ENCODE measurements at regions of chr9 and their contacts with region 1.

Region 1: GRCh38 chr9:69549310-69550202 is 122.6 kb downstream of the APBA1 start:
- DNase-seq: no peak
- H3K4me3 ChIP-seq: no peak overlapping the region
- H3K27ac ChIP-seq: no peak overlapping the region
- H3K4me1 ChIP-seq: peaks cover 0 to 3% (median 0%) of the 10 kb centered on the region in 4 donors
- H3K27me3 ChIP-seq: no peaks in the 10 kb centered on the region
- CTCF ChIP-seq: peak; percentile 83 to 86 (median 86)
- EP300 ChIP-seq: no peak
- POLR2A ChIP-seq: no peak

Region 2: DNA sequence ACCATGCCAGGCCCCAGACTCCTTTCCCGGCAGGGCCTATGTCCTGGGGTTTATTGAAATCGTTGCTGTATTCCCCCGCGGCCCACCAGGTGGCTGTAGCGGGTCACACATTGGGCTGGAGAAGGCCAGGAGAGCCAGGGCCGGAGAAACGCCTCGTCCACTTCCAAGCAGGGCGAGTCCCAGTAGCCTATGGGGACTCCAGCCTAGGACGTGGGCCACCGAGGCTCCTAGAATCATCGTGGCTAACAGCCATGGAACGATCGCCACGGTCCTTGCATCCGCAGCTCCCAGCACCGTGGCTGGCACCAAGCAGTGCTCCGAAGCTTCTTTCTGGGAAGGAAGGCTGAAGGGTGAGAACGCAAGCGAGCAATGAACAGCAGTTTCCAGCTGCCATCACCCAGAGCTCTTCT is 136.8 kb before region 1 on chr9:
- in situ Hi-C with region 1: loop called in 1 of 4 experiments (anchors 10 kb)
- intact Hi-C with region 1: no loop called
- DNase-seq: peak; percentile 25
- H3K4me3 ChIP-seq: no peak overlapping the region
- H3K27ac ChIP-seq: no peak overlapping the region
- H3K4me1 ChIP-seq: no peaks in the 10 kb centered on the region
- H3K27me3 ChIP-seq: peaks cover 5% of the 10 kb centered on the region
- CTCF ChIP-seq: peak in 4 of 5 experiments; percentile 37 to 45 (median 43)
- EP300 ChIP-seq: no peak
- POLR2A ChIP-seq: no peak

Region 3: DNA sequence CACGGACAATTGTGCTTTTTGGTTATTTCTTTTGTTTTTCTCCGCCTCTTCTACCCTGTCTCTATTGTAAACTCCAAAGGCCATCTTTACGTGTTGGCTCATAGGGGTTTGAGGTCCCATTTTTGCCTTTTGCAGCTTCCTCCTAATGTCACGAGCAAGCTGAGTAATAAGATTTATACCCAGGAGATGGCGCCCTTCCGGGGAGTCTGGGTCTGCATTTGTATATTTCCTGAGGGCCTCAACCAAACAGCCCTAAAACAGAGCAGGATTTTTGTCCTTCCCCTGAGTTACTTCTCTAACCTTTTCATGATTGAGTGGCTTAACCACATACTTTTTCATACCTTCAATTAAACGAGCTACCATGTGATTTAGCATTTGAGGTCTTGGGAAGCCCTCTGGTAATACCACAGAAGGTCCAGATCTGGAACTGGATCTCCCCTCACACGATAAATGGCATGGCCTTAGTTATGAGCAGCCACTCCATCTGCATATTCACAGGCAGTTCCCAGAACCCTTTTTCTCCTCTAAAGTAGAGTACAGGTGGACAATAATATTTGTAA is 259.8 kb after region 1 on chr9:
- in situ Hi-C with region 1: no loop called
- intact Hi-C with region 1: no loop called
- DNase-seq: no peak
- H3K4me3 ChIP-seq: no peak overlapping the region
- H3K27ac ChIP-seq: no peak overlapping the region
- H3K4me1 ChIP-seq: peaks cover 0 to 38% (median 8%) of the 10 kb centered on the region in 4 donors
- H3K27me3 ChIP-seq: no peaks in the 10 kb centered on the region
- CTCF ChIP-seq: no peak
- EP300 ChIP-seq: no peak
- POLR2A ChIP-seq: no peak

Measured in transverse colon (tissue), 4 donors.